ENCODE measurements at regions of chrX and their contacts with region 1.

Region 1: GRCh38 chrX:34656842-34657725 is at the start of gene TMEM47:
- DNase-seq: peak; percentile 27 to 53 (median 38)
- ATAC-seq: peak; percentile 99
- H3K4me3 ChIP-seq: peak within 1 kb of the TSS; percentile 27
- H3K27ac ChIP-seq: no peak within 1 kb of the TSS
- H3K4me1 ChIP-seq: peaks cover 0 to 9% of the 10 kb centered on the region in 2 experiments; a peak in 1 of 5 replicates
- H3K27me3 ChIP-seq: no peaks in the 10 kb centered on the region
- CTCF ChIP-seq: no peak
- EP300 ChIP-seq: no peak
- POLR2A ChIP-seq: no peak
- RAD21 ChIP-seq: no peak
- polyA plus RNA-seq, gene TMEM47: 0.03 TPM in 1 of 2 experiments, not detected in the other

Region 2: GRCh38 chrX:33465137-33465536 is 1191.9 kb before region 1 on chrX:
- CTCF ChIA-PET with region 1: no interaction called
- POLR2A ChIA-PET with region 1: no interaction called
- in situ Hi-C with region 1: loop called (anchors 25 kb)
- intact Hi-C with region 1: no loop called
- DNase-seq: no peak
- ATAC-seq: no peak
- H3K4me3 ChIP-seq: no peak overlapping the region
- H3K27ac ChIP-seq: no peak overlapping the region
- H3K4me1 ChIP-seq: no peaks in the 10 kb centered on the region
- H3K27me3 ChIP-seq: no peaks in the 10 kb centered on the region
- CTCF ChIP-seq: no peak
- EP300 ChIP-seq: no peak
- POLR2A ChIP-seq: no peak
- RAD21 ChIP-seq: no peak

Region 3: GRCh38 chrX:34612036-34612435 is 45.0 kb before region 1 on chrX:
- CTCF ChIA-PET with region 1: no interaction called
- POLR2A ChIA-PET with region 1: no interaction called
- in situ Hi-C with region 1: no loop called
- intact Hi-C with region 1: no loop called
- DNase-seq: no peak
- ATAC-seq: no peak
- H3K4me3 ChIP-seq: no peak overlapping the region
- H3K27ac ChIP-seq: no peak overlapping the region
- H3K4me1 ChIP-seq: no peaks in the 10 kb centered on the region
- H3K27me3 ChIP-seq: no peaks in the 10 kb centered on the region
- CTCF ChIP-seq: no peak
- EP300 ChIP-seq: no peak
- POLR2A ChIP-seq: no peak
- RAD21 ChIP-seq: no peak

Region 4: DNA sequence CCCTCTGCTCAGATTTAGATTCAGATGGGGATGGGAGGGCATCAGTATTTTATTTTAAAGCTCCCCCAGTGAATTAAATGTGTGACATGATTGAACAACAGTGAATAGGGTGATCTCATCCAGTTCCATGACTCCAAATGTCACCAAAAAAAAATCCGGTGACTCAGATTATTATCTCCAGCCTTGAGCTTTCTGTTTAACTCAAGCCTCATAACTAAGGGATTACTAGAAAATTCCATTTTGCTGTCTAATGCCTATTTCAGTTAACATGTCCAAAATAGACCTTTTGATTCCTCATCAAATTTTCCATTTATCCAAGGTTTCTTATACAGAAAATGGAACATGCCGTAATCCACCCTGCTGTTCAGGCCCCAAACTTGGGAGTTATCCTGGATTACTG is 121.9 kb after region 1 on chrX:
- CTCF ChIA-PET with region 1: no interaction called
- POLR2A ChIA-PET with region 1: no interaction called
- in situ Hi-C with region 1: no loop called
- intact Hi-C with region 1: no loop called
- DNase-seq: no peak
- ATAC-seq: no peak
- H3K4me3 ChIP-seq: no peak overlapping the region
- H3K27ac ChIP-seq: no peak overlapping the region
- H3K4me1 ChIP-seq: no peaks in the 10 kb centered on the region
- H3K27me3 ChIP-seq: no peaks in the 10 kb centered on the region
- CTCF ChIP-seq: no peak
- EP300 ChIP-seq: no peak
- POLR2A ChIP-seq: no peak
- RAD21 ChIP-seq: no peak

Region 5: GRCh38 chrX:35016051-35016450 is 359.0 kb after region 1 on chrX:
- CTCF ChIA-PET with region 1: no interaction called
- POLR2A ChIA-PET with region 1: no interaction called
- in situ Hi-C with region 1: no loop called
- intact Hi-C with region 1: no loop called
- DNase-seq: no peak
- ATAC-seq: no peak
- H3K4me3 ChIP-seq: no peak overlapping the region
- H3K27ac ChIP-seq: no peak overlapping the region
- H3K4me1 ChIP-seq: no peaks in the 10 kb centered on the region
- H3K27me3 ChIP-seq: no peaks in the 10 kb centered on the region
- CTCF ChIP-seq: no peak
- EP300 ChIP-seq: no peak
- POLR2A ChIP-seq: no peak
- RAD21 ChIP-seq: no peak